ENCODE measurements at regions of chr2 and their contacts with region 1.

Region 1: DNA sequence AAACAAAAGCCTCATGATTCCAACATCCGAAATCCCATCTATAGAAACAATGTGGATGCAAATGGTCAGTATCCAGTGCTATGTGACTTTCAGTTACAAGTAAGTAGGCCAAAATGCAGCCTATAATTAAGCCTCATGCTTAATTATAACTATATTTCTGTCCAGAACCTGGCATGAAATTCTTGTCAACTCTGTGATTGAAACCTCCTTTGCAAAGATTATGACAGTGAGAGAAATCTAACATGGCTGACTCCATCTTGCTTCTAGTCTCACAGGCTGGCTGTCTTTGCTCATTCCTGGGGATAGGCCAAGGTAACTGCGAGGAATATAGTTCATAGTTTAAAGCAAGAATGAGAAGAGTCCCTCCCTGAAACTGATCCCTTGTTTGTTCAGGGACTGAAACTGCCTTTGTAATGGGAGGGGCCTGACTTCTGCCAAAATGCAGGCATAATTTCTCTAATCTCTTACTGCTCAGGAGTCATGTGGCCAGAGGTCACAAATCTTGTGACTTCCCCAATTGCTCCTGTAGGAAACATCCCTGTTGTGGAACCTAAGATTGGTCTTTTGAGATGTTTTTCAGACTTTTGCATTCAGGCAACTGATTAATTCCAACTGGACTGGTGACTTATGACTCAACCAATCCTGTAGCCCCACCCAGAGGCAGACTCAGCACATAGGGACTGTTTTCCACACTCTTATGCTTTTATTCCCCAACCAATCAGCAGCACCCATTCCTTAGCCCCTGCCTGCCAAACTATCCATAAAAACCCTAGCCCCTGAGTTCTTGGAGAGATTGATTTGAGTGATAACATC is 84.5 kb upstream of the TLK1 start:
- DNase-seq: peak in 3 of 14 experiments; percentile 12 to 29 (median 16)
- ATAC-seq: no peak
- H3K4me3 ChIP-seq: no peak overlapping the region
- H3K4me3 Mint-ChIP-seq: no peak overlapping the region
- H3K27ac ChIP-seq: no peak overlapping the region
- H3K27ac Mint-ChIP-seq: no peak overlapping the region
- H3K4me1 ChIP-seq: peaks cover 31% of the 10 kb centered on the region
- H3K4me1 Mint-ChIP-seq: peaks cover 46% of the 10 kb centered on the region
- H3K27me3 ChIP-seq: no peaks in the 10 kb centered on the region
- H3K27me3 Mint-ChIP-seq: no peaks in the 10 kb centered on the region
- CTCF ChIP-seq: no peak

Region 2: GRCh38 chr2:171167352-171167992 is 77.7 kb before region 1 on chr2:
- CTCF ChIA-PET with region 1: no interaction called
- POLR2A ChIA-PET with region 1: interaction called, 8 read pairs
- intact Hi-C with region 1: loop called in 1 of 2 experiments (anchors 5 kb)
- DNase-seq: no peak
- ATAC-seq: no peak
- H3K4me3 ChIP-seq: no peak overlapping the region
- H3K4me3 Mint-ChIP-seq: no peak overlapping the region
- H3K27ac ChIP-seq: no peak overlapping the region
- H3K27ac Mint-ChIP-seq: no peak overlapping the region
- H3K4me1 ChIP-seq: peaks cover 16% of the 10 kb centered on the region
- H3K4me1 Mint-ChIP-seq: peaks cover 19% of the 10 kb centered on the region
- H3K27me3 ChIP-seq: no peaks in the 10 kb centered on the region
- H3K27me3 Mint-ChIP-seq: no peaks in the 10 kb centered on the region
- CTCF ChIP-seq: no peak

Region 3: DNA sequence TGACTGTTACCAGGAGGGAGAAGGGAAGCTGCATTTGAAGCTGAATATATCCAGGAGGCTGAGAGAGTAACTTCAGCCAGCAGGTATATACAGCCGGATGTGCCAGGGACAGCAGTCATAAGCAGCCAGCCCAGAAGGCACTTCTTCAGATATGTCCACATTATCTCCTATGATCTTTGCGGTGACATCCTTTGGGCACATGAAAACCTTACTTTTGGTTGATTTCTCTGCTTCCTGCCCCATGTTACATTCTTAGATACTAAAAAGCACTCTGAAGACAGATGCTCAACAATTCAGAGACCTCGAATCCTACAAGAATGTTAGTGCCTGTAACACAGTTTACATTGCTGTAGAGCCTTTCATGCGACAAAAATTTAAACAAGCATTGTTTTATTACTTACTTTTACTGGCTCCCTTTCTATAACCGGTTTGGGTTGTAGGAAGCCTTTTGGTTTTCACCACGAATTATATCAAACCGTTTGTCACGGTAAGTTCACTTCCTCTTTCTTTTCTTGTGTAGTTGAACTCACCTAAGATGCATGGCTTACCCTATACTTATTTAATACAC is 34.2 kb before region 1 on chr2:
- CTCF ChIA-PET with region 1: no interaction called
- POLR2A ChIA-PET with region 1: interaction called, 8 read pairs
- intact Hi-C with region 1: loop called in 1 of 2 experiments (anchors 2 kb)
- DNase-seq: peak; percentile 7 to 76 (median 31)
- ATAC-seq: peak; percentile 94
- H3K4me3 ChIP-seq: peak overlapping the region; percentile 50
- H3K4me3 Mint-ChIP-seq: peak overlapping the region; percentile 77
- H3K27ac ChIP-seq: peak overlapping the region in 1 of 2 donors; percentile 66
- H3K27ac Mint-ChIP-seq: peak overlapping the region; percentile 80
- H3K4me1 ChIP-seq: peaks cover 18% of the 10 kb centered on the region
- H3K4me1 Mint-ChIP-seq: peaks cover 25% of the 10 kb centered on the region
- H3K27me3 ChIP-seq: no peaks in the 10 kb centered on the region
- H3K27me3 Mint-ChIP-seq: no peaks in the 10 kb centered on the region
- CTCF ChIP-seq: no peak